ENCODE measurements at regions of chr2 and their contacts with region 1.

Region 1: DNA sequence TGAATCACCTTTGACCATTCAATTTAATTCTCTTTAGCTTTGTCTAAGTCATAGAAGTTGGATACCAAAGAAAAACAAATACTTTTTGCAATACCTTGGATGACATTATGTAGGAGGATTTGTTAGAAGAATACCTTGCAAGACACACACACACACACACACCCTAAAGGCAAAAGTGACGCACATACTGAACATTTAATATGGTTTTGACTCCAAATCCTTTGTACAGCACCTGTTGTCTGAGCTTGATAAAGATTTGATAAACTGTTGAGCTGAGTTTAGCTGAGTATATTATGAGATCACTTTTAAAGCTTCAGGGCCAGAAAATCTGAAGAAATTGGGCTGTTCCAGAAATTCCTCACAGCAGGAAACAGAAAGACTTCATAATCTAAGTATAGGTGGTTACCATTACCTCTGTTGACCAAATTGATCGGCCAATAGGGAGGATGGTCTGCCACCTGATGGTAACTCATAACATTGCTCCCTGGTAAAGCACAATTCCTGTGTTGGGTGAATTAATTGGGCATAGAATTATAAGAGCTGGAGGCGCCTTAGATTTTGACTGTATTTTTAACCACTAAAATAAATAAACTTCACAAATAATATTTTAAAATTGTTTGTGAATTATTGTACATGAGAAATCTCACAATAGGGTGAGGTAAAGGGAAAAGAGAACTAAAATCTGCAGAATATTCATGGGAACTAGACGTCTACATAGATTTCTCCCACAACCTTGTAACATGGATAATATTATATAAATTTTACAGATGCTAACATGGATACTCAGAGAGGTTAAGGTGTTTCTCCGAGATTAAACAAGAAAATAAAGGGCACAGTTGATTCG is 21.9 kb upstream of the RPIA start:
- DNase-seq: peak; percentile 41 to 48 (median 46)
- ATAC-seq: peak; percentile 60; the same call in 2 of the 3 replicates
- H3K4me3 ChIP-seq: no peak overlapping the region
- H3K27ac ChIP-seq: no peak overlapping the region
- H3K4me1 ChIP-seq: peaks cover 3 to 15% of the 10 kb centered on the region in 2 experiments; a peak in 4 of 5 replicates
- H3K27me3 ChIP-seq: no peaks in the 10 kb centered on the region
- CTCF ChIP-seq: peak; percentile 53 to 77 (median 59)
- EP300 ChIP-seq: no peak
- POLR2A ChIP-seq: no peak
- RAD21 ChIP-seq: peak; percentile 77 to 83

Region 2: GRCh38 chr2:88590998-88591613 is 78.5 kb before region 1 on chr2:
- CTCF ChIA-PET with region 1: interaction called, 54 read pairs
- POLR2A ChIA-PET with region 1: interaction called, 4 read pairs
- in situ Hi-C with region 1: loop called (anchors 5 kb)
- intact Hi-C with region 1: loop called (anchors 1 kb)
- DNase-seq: peak; percentile 56 to 68 (median 60)
- ATAC-seq: peak; percentile 90
- H3K4me3 ChIP-seq: no peak overlapping the region
- H3K27ac ChIP-seq: no peak overlapping the region
- H3K4me1 ChIP-seq: no peaks in the 10 kb centered on the region
- H3K27me3 ChIP-seq: no peaks in the 10 kb centered on the region
- CTCF ChIP-seq: peak; percentile 72 to 89 (median 73); a peak in 5 of 6 replicates
- EP300 ChIP-seq: no peak
- POLR2A ChIP-seq: no peak
- RAD21 ChIP-seq: peak; percentile 80 to 92

Region 3: GRCh38 chr2:88691339-88692183 is 22.0 kb after region 1 on chr2 and contains the start of gene RPIA:
- CTCF ChIA-PET with region 1: interaction called, 4 read pairs
- POLR2A ChIA-PET with region 1: no interaction called
- in situ Hi-C with region 1: no loop called
- intact Hi-C with region 1: loop called (anchors 2 kb)
- DNase-seq: peak; percentile 96 to 99 (median 96)
- ATAC-seq: peak; percentile 97
- H3K4me3 ChIP-seq: peak within 1 kb of the TSS; percentile 80
- H3K27ac ChIP-seq: peak within 1 kb of the TSS; percentile 79
- H3K4me1 ChIP-seq: peaks cover 5 to 12% of the 10 kb centered on the region in 2 experiments; a peak in 4 of 5 replicates
- H3K27me3 ChIP-seq: no peaks in the 10 kb centered on the region
- CTCF ChIP-seq: peak; percentile 81 to 96 (median 95)
- EP300 ChIP-seq: no peak; the same call in 1 of the 2 replicates
- POLR2A ChIP-seq: peak; percentile 85
- RAD21 ChIP-seq: peak; percentile 41 to 56
- polyA plus RNA-seq, gene RPIA: 7.8 to 15.1 TPM

Region 4: DNA sequence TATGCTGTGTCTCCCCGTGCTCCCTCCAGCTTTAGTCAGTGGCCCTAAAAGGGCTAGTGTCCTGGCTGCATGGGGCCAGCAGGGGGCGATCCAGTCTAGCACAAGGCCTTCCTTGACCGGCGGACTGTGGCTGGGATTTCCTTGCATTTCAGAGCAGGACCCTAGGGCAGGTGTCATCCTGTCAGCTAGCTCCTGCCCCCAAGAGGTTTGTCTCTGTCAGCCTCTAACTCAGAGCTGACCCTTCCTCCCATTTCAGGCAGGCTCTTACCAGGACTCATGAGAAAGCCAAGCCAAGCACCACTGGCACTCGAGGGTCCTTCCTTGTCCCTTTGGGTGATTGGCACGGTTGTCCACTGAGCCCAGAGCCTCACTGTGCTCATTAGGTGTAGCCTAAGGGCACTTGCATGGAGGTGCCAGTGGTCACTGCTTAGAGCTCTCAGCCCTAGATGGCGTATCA is 162.2 kb after region 1 on chr2:
- CTCF ChIA-PET with region 1: no interaction called
- POLR2A ChIA-PET with region 1: no interaction called
- in situ Hi-C with region 1: no loop called
- intact Hi-C with region 1: no loop called
- DNase-seq: peak; percentile 62 to 75 (median 68)
- ATAC-seq: peak; percentile 99
- H3K4me3 ChIP-seq: no peak overlapping the region
- H3K27ac ChIP-seq: no peak overlapping the region
- H3K4me1 ChIP-seq: no peaks in the 10 kb centered on the region
- H3K27me3 ChIP-seq: peaks cover 2 to 25% of the 10 kb centered on the region in 2 experiments; a peak in 3 of 5 replicates
- CTCF ChIP-seq: peak; percentile 86 to 94 (median 89)
- EP300 ChIP-seq: no peak
- POLR2A ChIP-seq: no peak
- RAD21 ChIP-seq: peak; percentile 63 to 83

Measured in K562 (cell line).